Activated CD8-positive, alpha-beta memory T cell treated with anti-CD3 and anti-CD28 coated beads, Interleukin-2, amount 10 ng/mL, durations not matched to agents 7 days and 5 days (primary cell): ENCODE measurements at regions of chr19 and their contacts with region 1.

Region 1: GRCh38 chr19:46265217-46265828 is 31.5 kb upstream of the HIF3A start:
- DNase-seq: peak; percentile 80
- ATAC-seq: peak; percentile 76
- H3K4me3 Mint-ChIP-seq: no peak overlapping the region
- H3K27ac Mint-ChIP-seq: no peak overlapping the region
- H3K4me1 Mint-ChIP-seq: peaks cover 17% of the 10 kb centered on the region
- H3K27me3 Mint-ChIP-seq: peaks cover 78% of the 10 kb centered on the region

Region 2: DNA sequence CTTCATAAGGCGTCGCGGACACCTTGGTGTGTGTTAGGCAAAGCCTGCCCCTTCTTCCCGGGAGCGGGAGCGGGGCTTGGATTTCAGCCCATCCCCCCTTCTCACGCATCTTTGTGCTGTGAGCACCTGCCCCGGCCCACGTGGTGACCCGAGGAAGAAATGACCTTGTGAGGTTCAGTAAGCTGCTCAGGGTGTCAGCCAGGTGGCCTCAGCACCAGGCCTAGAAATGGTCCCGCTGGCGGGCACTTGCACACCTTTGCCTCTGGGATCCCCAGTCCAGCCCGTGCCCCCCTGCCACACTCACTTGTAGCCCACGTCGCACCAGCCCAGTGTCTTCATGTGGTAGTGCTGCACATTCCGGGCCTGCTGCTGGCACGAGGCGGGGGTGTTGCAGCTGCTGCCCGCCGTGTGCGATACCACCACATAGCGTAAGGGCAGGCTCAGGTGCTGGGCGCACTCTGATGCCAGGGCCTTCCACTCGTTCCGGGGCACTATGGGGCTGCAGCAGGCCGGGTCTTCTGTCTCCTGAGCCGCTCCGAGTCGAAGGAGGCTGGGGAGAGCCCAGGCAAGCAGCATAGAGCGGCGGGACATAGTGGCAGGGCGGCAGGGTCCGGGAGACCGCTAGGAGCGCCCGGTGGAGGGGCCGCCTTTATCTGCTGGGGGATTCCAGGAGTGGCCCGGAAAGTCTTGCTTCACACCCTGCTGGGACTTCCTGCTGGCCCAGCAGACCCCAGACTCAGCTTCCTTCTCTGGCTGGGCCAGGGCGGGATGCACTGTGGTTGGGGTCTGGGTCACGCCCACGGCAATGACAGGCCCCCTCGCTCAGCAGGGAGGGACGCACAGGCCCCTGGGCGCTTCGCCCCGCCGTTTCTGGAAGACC is 242.7 kb before region 1 on chr19 and contains the start of gene PGLYRP1:
- CTCF ChIA-PET with region 1: interaction called, 79 read pairs
- DNase-seq: no peak
- ATAC-seq: no peak
- H3K4me3 Mint-ChIP-seq: no peak within 1 kb of the TSS
- H3K27ac Mint-ChIP-seq: no peak within 1 kb of the TSS
- H3K4me1 Mint-ChIP-seq: peaks cover 11% of the 10 kb centered on the region
- H3K27me3 Mint-ChIP-seq: peaks cover 39% of the 10 kb centered on the region
- total RNA-seq, gene PGLYRP1: not detected

Region 3: GRCh38 chr19:46079576-46079975 is 185.7 kb before region 1 on chr19:
- CTCF ChIA-PET with region 1: interaction called, 11 read pairs
- DNase-seq: no peak
- ATAC-seq: no peak
- H3K4me3 Mint-ChIP-seq: no peak overlapping the region
- H3K27ac Mint-ChIP-seq: no peak overlapping the region
- H3K4me1 Mint-ChIP-seq: peaks cover 1% of the 10 kb centered on the region
- H3K27me3 Mint-ChIP-seq: peaks cover 83% of the 10 kb centered on the region

Region 4: DNA sequence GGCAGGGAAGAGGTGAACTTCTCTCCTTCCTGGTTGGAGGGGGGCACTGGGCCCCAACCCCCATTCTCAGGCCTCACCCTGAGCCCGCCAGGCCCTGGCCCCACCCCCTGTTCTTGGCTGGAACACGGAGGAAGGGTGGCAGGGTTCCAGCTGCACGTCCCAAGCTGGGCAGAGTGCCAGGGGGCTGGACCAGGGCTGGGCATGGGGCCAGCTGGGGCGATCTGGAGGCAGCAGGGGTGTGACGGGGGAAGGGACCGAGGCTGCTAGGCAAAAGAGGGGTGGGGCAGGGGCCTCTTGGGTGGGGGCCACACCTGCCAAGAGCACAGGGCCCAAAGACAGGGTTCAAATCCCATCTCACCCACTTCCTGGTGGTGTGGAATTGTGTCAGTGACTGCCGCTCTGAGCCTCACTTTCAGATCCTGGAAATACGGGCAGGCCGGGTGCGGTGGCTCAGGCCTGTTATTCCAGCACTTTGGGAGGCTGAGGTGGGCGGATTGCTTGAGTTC is 33.7 kb after region 1 on chr19:
- CTCF ChIA-PET with region 1: no interaction called
- DNase-seq: no peak
- ATAC-seq: no peak
- H3K4me3 Mint-ChIP-seq: no peak overlapping the region
- H3K27ac Mint-ChIP-seq: no peak overlapping the region
- H3K4me1 Mint-ChIP-seq: no peaks in the 10 kb centered on the region
- H3K27me3 Mint-ChIP-seq: peaks cover 33% of the 10 kb centered on the region